Activated T-helper 1 cell treated with anti-CD3 and anti-CD28 coated beads, Interleukin-12 subunit alpha, Interleukin-12 subunit beta, Interleukin-2, Interleukin-4 antibody, amounts not matched to agents 30 ng/mL and 10 ng/mL and 1 ng/mL, durations not matched to agents 14 hours and 24 hours and 36 hours (primary cell): ENCODE measurements at regions of chr22 and their contacts with region 1.

Region 1: DNA sequence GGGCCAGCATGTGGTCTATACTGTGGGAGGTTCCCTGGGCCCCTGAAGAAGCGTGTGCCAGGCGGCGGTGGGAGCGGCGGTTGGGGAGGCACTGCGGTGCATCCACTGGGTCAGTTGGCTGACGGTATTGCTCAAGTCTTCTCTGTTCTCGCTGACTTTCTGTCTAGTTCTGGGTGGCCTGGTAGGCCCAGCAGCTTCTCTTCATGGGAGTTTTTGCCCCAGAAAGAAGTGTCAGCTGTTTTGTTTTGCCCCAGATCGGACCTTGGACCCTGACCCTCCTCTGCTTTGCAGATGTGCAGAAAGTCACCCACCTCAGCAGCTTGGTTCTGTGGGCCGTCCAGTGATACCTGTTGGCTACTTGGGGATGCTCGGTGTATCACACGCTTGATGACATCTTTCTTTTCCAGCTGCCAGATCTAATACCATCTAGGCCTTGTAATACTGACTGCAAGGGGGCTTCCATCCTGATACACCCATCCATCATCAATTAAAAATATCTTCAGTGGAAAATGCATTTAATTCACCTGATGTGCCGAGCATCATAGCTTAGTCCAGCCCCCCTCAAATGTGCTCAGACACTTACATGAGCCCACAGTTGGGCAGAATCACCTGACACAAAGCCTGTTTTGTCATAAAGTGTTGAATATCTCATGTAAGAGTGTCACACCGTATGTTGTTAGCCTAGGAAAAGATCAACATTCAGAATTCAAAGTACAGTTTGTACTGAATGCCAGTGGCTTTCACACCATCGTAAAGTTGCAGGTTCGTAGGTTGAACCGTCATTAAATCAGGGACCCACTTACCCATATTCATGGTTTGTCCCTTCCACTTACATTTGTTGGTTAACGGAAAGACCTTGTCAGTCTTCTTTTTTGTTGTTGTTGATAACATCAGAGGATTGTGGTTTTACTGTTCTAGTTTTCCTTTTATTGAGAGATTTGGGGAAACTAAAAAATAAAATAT is 13.9 kb downstream of the ZBED4 start:
- DNase-seq: no peak
- H3K4me3 Mint-ChIP-seq: peak overlapping the region; percentile 51
- H3K27ac Mint-ChIP-seq: peak overlapping the region; percentile 82
- H3K4me1 Mint-ChIP-seq: peaks cover 47% of the 10 kb centered on the region
- H3K27me3 Mint-ChIP-seq: no peaks in the 10 kb centered on the region

Region 2: GRCh38 chr22:49807780-49808708 is 59.5 kb before region 1 on chr22:
- intact Hi-C with region 1: loop called (anchors 5 kb)
- DNase-seq: peak; percentile 48
- H3K4me3 Mint-ChIP-seq: peak overlapping the region; percentile 70
- H3K27ac Mint-ChIP-seq: peak overlapping the region; percentile 80
- H3K4me1 Mint-ChIP-seq: peaks cover 63% of the 10 kb centered on the region
- H3K27me3 Mint-ChIP-seq: no peaks in the 10 kb centered on the region

Region 3: DNA sequence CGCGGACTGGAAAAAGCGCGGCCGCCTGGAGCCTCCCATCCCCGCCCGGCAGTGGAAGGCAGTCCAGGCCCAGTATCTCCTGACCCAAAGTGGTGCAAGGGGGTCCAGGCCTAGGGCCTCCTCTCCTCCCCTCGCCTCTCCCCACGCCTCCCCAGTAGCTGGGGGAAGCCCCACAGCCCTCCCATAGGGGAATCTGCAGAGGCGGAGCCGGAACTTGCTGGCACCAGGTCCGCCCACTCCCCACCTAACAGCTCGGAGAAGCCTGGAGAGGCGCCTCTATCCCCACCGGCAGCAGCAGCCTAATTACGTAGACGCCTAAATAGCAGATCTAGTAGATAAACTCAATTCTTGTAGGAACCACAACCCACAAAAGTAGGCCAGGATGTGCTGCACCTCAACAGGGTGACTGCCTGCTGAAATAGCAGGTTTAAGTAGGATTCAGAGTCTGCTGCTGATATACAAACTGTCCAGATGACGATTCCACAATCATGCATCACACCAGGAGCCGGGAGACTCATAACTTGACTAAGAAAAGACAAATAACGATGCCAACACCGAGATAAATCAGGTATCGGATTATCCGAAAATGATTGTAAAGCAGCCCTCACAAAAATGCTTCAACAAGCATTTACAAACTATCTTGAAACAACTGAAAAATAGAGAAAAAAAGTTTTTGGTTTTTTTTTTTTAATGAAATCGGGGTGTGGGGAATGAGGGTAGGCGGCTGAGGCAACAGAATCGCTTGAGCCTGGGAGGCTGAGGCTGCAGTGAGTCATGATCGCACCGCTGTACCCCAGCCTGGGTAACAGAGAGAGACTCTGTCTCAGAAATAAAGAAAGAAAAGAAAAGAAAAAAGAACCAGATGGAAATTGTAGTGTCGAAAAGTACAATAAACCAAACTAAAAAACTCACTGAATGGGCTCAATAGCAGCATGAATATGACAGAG is 28.5 kb before region 1 on chr22:
- intact Hi-C with region 1: loop called (anchors 2 kb)
- DNase-seq: peak; percentile 85
- H3K4me3 Mint-ChIP-seq: peak overlapping the region; percentile 68
- H3K27ac Mint-ChIP-seq: peak overlapping the region; percentile 87
- H3K4me1 Mint-ChIP-seq: peaks cover 28% of the 10 kb centered on the region
- H3K27me3 Mint-ChIP-seq: peaks cover 4% of the 10 kb centered on the region

Region 4: GRCh38 chr22:49852898-49853894 is 14.4 kb before region 1 on chr22 and contains the start of gene ZBED4:
- intact Hi-C with region 1: loop called (anchors 1 kb)
- DNase-seq: peak; percentile 99
- H3K4me3 Mint-ChIP-seq: peak within 1 kb of the TSS; percentile 98
- H3K27ac Mint-ChIP-seq: peak within 1 kb of the TSS; percentile 97
- H3K4me1 Mint-ChIP-seq: peaks cover 32% of the 10 kb centered on the region
- H3K27me3 Mint-ChIP-seq: peaks cover 10% of the 10 kb centered on the region
- total RNA-seq, gene ZBED4: 19.4 and 20.9 TPM in 2 replicates

Region 5: DNA sequence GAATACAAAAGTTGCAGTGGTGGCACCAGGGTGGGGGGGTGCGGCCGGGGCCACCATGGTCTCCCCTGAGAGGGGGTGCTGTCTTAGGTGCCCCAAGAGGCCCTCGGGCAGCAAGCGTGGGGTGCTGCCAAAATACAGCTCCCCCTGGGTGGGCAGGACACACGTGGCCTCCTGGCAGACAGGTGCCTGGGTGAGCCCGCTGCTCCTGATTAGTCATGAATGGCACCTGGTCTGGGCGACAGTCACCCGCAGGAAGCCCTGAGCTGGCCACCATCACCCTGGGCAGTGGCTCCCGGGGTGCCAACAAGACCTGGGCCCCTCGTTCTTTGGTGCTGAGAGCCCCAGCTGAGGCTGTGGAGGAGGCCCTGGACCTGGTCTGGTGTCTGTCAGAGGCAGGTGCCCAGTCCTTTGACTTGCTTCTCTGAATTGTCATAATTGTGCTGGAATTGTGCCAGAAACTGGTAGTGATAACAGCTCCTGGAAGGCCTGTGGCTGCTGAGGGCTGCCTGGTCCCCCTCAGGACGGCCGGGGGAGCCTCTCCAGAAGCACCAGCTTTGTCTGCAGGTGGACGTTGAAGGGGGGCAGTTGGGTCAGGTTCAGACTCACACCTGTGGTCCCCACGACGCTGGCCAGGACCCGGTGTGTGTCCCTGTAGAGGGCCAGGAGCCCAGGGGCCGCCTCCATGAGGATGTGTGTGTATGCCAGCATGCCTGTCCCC is 35.9 kb after region 1 on chr22:
- intact Hi-C with region 1: no loop called
- DNase-seq: no peak
- H3K4me3 Mint-ChIP-seq: no peak overlapping the region
- H3K27ac Mint-ChIP-seq: no peak overlapping the region
- H3K4me1 Mint-ChIP-seq: no peaks in the 10 kb centered on the region
- H3K27me3 Mint-ChIP-seq: no peaks in the 10 kb centered on the region